Left colon (tissue), 2 donors: ENCODE measurements at regions of chr1 and their contacts with region 1.

Region 1: GRCh38 chr1:33080885-33081553 is at the start of gene AZIN2:
- DNase-seq: peak; percentile 97 to 100
- ATAC-seq: peak; percentile 99
- total RNA-seq, gene AZIN2: 10.1 to 22.7 TPM

Region 2: DNA sequence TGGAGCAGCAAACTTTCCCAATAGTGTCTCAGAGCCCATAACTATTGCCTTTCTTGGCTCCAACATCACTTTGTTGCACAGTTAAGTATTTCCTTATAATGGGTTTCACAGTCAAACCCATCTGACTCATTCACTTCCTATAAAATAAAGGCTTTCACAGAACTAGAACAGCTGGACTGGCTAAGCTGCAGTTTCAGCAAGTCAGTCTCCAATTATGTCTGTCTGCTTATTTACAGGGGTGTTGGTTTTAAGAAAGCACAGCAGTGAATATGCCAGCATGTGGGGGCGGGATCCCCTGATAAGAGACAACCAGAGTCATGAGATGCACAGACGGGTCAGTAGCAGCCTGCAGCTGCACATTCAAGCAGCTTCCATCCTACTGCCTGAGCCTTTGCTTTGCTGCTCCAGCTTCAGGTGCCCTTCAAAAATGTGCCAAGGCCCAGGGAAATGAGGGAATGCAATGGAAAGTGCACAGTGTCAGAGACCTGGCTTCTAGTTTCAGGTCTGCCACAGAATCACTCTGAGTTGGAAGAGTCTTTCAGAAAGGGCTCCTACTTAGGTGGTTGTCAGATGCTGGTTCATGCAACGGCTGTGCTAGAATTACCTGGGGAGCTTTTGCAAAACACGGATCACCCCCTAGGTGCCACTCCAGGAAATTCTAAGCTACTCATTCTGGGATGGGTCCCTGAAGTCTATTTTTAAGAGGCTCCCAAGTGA is 141.2 kb before region 1 on chr1:
- intact Hi-C with region 1: loop called in 1 of 2 experiments (anchors 10 kb)
- DNase-seq: peak; percentile 61 to 70
- ATAC-seq: peak; percentile 68